Caco-2 (cell line): ENCODE measurements at regions of chr19 and their contacts with region 1.

Region 1: GRCh38 chr19:37988758-37989635 is 82.0 kb downstream of the SIPA1L3 start:
- DNase-seq: no peak
- H3K4me3 ChIP-seq: no peak overlapping the region
- H3K4me3 Mint-ChIP-seq: no peak overlapping the region
- H3K27ac Mint-ChIP-seq: peak overlapping the region; percentile 92
- H3K4me1 ChIP-seq: peaks cover 69% of the 10 kb centered on the region
- H3K4me1 Mint-ChIP-seq: peaks cover 55% of the 10 kb centered on the region
- H3K27me3 ChIP-seq: no peaks in the 10 kb centered on the region
- H3K27me3 Mint-ChIP-seq: no peaks in the 10 kb centered on the region
- CTCF ChIP-seq: no peak

Region 2: GRCh38 chr19:37931881-37932655 is 56.9 kb before region 1 on chr19:
- CTCF ChIA-PET with region 1: interaction called, 4 read pairs
- POLR2A ChIA-PET with region 1: interaction called, 17 read pairs
- intact Hi-C with region 1: no loop called
- DNase-seq: peak; percentile 92 to 94
- H3K4me3 ChIP-seq: peak overlapping the region; percentile 48
- H3K4me3 Mint-ChIP-seq: peak overlapping the region; percentile 75
- H3K27ac Mint-ChIP-seq: peak overlapping the region; percentile 97
- H3K4me1 ChIP-seq: peaks cover 45% of the 10 kb centered on the region
- H3K4me1 Mint-ChIP-seq: peaks cover 36% of the 10 kb centered on the region
- H3K27me3 ChIP-seq: no peaks in the 10 kb centered on the region
- H3K27me3 Mint-ChIP-seq: no peaks in the 10 kb centered on the region
- CTCF ChIP-seq: no peak